Prostate gland (tissue), 2 donors: ENCODE measurements at regions of chr13 and their contacts with region 1.

Region 1: DNA sequence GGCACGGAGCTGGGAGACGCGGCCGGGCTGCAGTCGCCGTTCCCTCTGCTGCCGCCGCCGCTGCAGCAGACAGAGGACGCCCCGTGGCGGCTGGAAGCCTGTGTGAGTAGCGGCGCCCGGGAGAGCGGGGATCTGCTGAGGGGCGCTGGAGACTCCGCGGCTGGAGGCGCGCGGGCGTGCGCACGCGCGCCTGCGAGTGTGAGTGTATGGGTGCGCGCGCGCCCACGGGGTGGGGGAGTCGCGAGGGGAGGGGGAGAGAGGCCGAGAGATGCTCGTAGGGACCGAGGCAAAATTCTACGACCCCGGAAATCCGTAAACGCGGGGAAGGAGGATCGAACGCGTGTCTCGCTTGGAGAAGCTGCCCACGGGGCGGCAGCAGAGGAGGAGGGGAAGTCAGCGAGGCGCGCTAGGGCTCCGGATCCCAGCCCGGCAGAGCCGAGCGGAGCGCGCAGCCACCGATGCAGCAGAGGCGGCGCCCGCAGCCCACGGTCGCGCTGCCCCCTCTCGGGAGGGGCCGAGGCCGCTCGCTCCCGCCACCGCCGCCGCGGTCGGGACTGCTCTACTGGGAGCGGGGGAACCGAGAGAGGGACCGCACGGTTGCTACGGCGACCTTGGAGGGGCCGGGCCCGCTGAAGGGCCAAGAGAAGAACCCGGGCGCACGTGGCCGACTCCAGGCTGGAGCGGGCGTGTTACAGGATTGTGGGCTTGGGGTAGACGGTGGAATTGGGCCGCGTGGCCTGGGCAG is at the start of gene ENOX1:
- DNase-seq: peak; percentile 62
- H3K4me3 ChIP-seq: peak within 1 kb of the TSS; percentile 66 to 72
- H3K27ac ChIP-seq: peak within 1 kb of the TSS; percentile 78 to 80
- H3K4me1 ChIP-seq: no peaks in the 10 kb centered on the region
- H3K27me3 ChIP-seq: no peaks in the 10 kb centered on the region
- CTCF ChIP-seq: peak in 1 of 4 experiments; percentile 37
- POLR2A ChIP-seq: no peak
- total RNA-seq, gene ENOX1: 4.5 to 5.3 TPM

Region 2: DNA sequence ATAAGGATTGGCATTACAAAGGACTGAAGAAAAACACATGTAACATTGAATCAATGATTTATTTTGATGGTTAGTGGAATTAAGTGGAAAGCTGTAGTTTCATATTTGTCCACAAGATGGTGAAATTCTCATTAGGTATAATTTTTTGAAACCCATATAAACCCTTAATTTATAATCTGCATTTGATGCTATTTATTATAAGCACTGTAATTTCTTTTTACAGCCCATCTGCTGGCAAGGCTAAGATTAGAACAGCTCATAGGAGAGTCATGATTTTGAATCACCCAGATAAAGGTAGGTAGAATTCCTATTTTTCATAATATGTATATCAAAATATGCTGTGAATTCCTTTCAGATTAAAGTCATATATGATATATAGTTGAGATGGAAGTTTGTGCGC is 701.4 kb before region 1 on chr13:
- intact Hi-C with region 1: loop called (anchors 5 kb)
- DNase-seq: no peak
- H3K4me3 ChIP-seq: no peak overlapping the region
- H3K27ac ChIP-seq: no peak overlapping the region
- H3K4me1 ChIP-seq: no peaks in the 10 kb centered on the region
- H3K27me3 ChIP-seq: no peaks in the 10 kb centered on the region
- CTCF ChIP-seq: peak; percentile 61 to 77 (median 71)
- POLR2A ChIP-seq: no peak

Region 3: GRCh38 chr13:43196086-43196621 is 590.8 kb before region 1 on chr13:
- intact Hi-C with region 1: loop called (anchors 10 kb)
- DNase-seq: no peak
- H3K4me3 ChIP-seq: no peak overlapping the region
- H3K27ac ChIP-seq: no peak overlapping the region
- H3K4me1 ChIP-seq: no peaks in the 10 kb centered on the region
- H3K27me3 ChIP-seq: no peaks in the 10 kb centered on the region
- CTCF ChIP-seq: no peak
- POLR2A ChIP-seq: no peak

Region 4: DNA sequence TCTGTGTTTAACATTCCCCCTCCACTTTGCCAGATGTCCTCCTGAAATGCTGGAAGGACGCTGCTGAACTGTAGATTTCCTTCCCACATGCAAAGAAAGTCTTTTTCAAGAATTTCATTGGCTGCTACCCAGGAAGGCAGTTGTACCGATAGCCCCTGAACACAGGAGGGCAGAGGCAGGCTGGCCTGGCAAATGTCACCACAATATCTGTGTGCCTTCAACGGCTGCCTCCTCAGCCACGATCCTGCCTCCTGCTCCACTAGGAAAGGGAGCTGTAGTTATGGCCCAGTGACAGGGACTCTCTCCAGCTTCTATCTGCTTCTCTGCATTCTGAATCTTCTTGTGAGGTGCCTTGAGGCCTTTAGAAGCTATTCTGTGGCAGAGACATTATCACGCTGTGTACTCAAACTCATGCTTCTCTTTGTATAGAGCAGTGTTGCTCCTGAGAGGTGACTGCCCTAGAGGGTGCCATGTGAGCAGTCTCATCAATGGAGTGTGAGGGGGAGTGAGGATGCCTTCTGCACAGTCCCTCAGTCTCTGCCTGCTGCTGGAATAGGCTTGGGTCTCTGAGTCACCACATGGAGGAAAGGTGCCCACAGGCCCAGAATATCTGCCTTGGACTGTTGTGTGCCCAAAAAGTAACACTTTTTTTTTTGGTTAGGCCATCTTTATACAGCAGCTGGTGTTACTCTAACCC is 483.8 kb before region 1 on chr13:
- intact Hi-C with region 1: loop called (anchors 5 kb)
- DNase-seq: peak; percentile 65
- H3K4me3 ChIP-seq: no peak overlapping the region
- H3K27ac ChIP-seq: peak overlapping the region; percentile 65 to 79
- H3K4me1 ChIP-seq: peaks cover 19% of the 10 kb centered on the region
- H3K27me3 ChIP-seq: no peaks in the 10 kb centered on the region
- CTCF ChIP-seq: peak in 3 of 4 experiments; percentile 42 to 65 (median 61)
- POLR2A ChIP-seq: no peak

Region 5: DNA sequence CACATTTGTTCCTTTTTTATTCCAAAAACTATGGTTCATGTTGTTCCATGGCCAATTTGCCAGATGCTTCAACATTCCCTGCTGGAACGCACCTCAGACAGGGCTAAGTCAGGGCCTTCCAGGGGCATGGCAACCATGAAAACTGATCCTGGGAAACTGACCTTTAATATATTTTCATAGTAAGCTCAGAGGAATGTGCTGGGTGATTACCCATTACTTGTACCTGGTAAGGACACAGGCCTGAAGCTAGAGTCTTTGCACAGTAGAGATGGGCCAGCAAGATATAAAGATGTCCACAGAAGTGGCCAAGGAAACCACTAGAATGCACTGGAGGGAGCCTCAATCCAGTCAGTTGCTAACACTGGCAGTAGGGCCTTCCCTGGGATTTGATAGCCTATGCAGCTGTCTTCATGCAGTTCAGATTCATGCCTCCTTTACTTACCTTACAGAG is 353.2 kb before region 1 on chr13:
- intact Hi-C with region 1: no loop called
- DNase-seq: no peak
- H3K4me3 ChIP-seq: no peak overlapping the region
- H3K27ac ChIP-seq: no peak overlapping the region
- H3K4me1 ChIP-seq: no peaks in the 10 kb centered on the region
- H3K27me3 ChIP-seq: no peaks in the 10 kb centered on the region
- CTCF ChIP-seq: no peak
- POLR2A ChIP-seq: no peak

Region 6: GRCh38 chr13:43516401-43516833 is 270.5 kb before region 1 on chr13:
- intact Hi-C with region 1: loop called (anchors 5 kb)
- DNase-seq: peak; percentile 63
- H3K4me3 ChIP-seq: no peak overlapping the region
- H3K27ac ChIP-seq: peak overlapping the region; percentile 35 to 53
- H3K4me1 ChIP-seq: no peaks in the 10 kb centered on the region
- H3K27me3 ChIP-seq: no peaks in the 10 kb centered on the region
- CTCF ChIP-seq: no peak
- POLR2A ChIP-seq: no peak

Region 7: GRCh38 chr13:43546251-43546650 is 240.7 kb before region 1 on chr13:
- intact Hi-C with region 1: loop called (anchors 10 kb)
- DNase-seq: no peak
- H3K4me3 ChIP-seq: no peak overlapping the region
- H3K27ac ChIP-seq: peak overlapping the region in 1 of 2 donors; percentile 22
- H3K4me1 ChIP-seq: no peaks in the 10 kb centered on the region
- H3K27me3 ChIP-seq: no peaks in the 10 kb centered on the region
- CTCF ChIP-seq: no peak
- POLR2A ChIP-seq: no peak

Region 8: DNA sequence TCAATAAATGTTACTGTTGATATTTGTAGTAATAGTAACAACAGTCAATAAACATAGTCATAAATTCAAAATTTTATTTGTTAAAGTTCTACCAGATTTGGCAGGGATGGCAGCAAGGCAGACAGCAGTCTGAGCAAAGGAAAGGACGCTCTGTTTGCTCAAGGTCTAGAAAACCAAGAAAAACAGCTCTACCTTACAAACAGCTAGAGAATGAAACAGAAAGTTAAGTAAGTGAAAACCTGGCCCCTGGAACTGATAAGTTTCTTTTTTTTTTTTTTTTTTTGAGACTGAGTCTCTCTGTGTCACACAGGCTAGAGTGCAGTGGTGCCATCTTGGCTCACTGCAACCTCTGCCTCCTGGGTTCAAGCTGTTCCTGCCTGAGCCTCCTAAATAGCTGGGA is 28.1 kb before region 1 on chr13:
- intact Hi-C with region 1: no loop called
- DNase-seq: no peak
- H3K4me3 ChIP-seq: no peak overlapping the region
- H3K27ac ChIP-seq: peak overlapping the region; percentile 20 to 43
- H3K4me1 ChIP-seq: peaks cover 6% of the 10 kb centered on the region
- H3K27me3 ChIP-seq: no peaks in the 10 kb centered on the region
- CTCF ChIP-seq: no peak
- POLR2A ChIP-seq: no peak